ENCODE measurements at regions of chr7 and their contacts with region 1.

Region 1: DNA sequence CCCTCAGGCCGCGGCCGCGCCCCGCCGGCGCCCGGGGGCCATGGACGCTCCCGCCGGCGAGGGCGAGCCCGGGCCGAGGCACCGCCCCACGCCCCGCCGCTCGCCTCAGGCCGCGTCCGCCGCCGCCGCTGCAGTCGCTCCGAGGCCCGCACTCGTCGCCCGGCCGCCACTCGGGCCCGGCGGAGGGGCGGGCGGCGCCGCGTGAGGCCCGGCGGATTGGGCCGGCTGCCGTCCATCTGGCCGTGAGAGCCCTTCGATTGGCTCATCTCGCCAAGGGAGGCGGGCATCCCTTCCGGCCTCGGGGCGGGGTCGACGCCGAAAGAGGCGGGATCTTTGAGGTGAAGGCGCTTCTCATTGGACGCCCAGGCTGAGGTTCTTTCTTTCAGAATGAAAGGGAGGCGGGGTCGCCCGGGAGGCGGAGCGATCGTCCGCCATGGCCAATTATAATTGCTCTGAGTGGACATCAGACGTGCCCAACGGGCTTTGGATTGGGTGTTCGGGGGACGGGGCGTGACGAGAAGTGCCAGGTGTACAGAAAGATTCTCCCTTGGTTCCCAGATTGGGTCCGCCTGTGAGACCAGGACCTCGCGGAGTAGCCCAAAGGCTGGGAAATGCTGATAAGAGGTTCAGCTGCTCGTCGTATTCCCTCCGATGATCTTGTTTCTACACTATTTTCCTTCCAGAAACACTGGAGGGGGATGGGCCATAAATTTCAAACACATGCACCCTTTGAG is at the start of gene GNA12:
- DNase-seq: peak; percentile 99
- CTCF ChIP-seq: no peak

Region 2: DNA sequence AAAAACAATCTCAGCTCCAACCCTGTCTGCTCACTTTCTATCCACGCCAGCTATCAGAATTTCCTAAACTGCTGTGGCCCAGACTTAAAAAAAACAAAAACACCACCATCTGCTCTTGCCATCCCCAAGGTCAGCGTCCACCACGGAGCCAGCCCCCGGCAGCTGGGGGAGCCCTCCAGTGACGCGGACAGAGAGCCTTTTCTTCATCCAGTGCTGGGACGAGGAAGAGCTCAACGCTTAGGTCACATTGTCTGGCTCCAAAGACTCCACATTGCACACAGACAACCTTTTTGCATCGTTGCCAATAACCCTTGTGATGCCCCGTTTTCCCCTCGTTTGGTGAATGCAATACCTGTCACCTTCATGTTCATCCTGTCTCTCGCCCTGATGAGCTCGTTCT is 67.1 kb after region 1 on chr7:
- CTCF ChIA-PET with region 1: no interaction called
- POLR2A ChIA-PET with region 1: interaction called, 10 read pairs
- DNase-seq: no peak
- CTCF ChIP-seq: no peak

Measured in GM10248 (cell line).